ENCODE measurements at regions of chr14 and their contacts with region 1.

Region 1: DNA sequence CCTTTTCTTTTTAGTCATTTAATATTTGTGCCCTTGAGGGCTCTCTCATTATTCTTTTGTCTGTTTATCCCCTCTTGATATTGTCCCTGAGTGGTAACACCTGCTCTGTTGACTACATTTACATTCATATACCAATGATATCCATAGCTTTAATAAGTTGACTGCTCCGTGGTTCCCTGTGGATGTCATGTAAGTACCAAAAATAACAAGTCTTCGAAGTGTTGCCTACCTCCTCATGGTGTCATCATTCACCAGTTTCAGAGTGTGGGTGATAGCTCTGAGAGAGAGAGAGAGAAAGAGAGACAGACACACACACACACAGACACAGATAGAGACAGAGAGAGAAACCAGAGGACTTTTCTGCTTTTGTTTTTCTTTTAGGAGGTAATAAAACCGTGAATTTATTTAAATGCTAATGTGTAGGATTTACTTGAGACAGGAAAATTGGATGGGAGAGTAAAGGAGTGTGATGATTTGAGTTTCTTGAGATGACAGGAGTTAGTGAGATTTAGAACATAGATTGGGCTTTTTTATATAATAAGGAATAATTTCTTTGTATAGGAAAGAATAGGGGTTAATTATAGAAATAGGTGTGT is 52.2 kb downstream of the PAPOLA start:
- DNase-seq: no peak
- ATAC-seq: no peak
- H3K4me3 ChIP-seq: no peak overlapping the region
- H3K27ac ChIP-seq: no peak overlapping the region
- H3K4me1 ChIP-seq: no peaks in the 10 kb centered on the region
- H3K27me3 ChIP-seq: no peaks in the 10 kb centered on the region
- CTCF ChIP-seq: no peak
- EP300 ChIP-seq: no peak
- POLR2A ChIP-seq: no peak
- RAD21 ChIP-seq: no peak

Region 2: GRCh38 chr14:96567289-96567899 is 13.0 kb after region 1 on chr14:
- CTCF ChIA-PET with region 1: interaction called, 27 read pairs
- POLR2A ChIA-PET with region 1: no interaction called
- RAD21 ChIA-PET with region 1: interaction called, 3 read pairs
- SMC1A ChIA-PET with region 1: interaction called, 7 read pairs
- in situ Hi-C with region 1: no loop called
- intact Hi-C with region 1: no loop called
- DNase-seq: no peak
- ATAC-seq: peak; percentile 90
- H3K4me3 ChIP-seq: no peak overlapping the region
- H3K27ac ChIP-seq: no peak overlapping the region
- H3K4me1 ChIP-seq: no peaks in the 10 kb centered on the region
- H3K27me3 ChIP-seq: no peaks in the 10 kb centered on the region
- CTCF ChIP-seq: peak; percentile 38 to 50 (median 48); a peak in 5 of 6 replicates
- EP300 ChIP-seq: no peak
- POLR2A ChIP-seq: no peak
- RAD21 ChIP-seq: peak; percentile 55